ENCODE measurements at regions of chr6 and their contacts with region 1.

Region 1: GRCh38 chr6:86856937-86857563 is 80.3 kb upstream of the HTR1E start:
- DNase-seq: peak; percentile 35
- H3K4me3 Mint-ChIP-seq: no peak overlapping the region
- H3K27ac Mint-ChIP-seq: no peak overlapping the region
- H3K4me1 Mint-ChIP-seq: no peaks in the 10 kb centered on the region
- H3K27me3 Mint-ChIP-seq: no peaks in the 10 kb centered on the region

Region 2: GRCh38 chr6:85923013-85923430 is 934.0 kb before region 1 on chr6:
- CTCF ChIA-PET with region 1: interaction called, 12 read pairs
- DNase-seq: no peak
- H3K4me3 Mint-ChIP-seq: no peak overlapping the region
- H3K27ac Mint-ChIP-seq: no peak overlapping the region
- H3K4me1 Mint-ChIP-seq: no peaks in the 10 kb centered on the region
- H3K27me3 Mint-ChIP-seq: no peaks in the 10 kb centered on the region

Region 3: GRCh38 chr6:87366072-87366827 is 509.2 kb after region 1 on chr6:
- CTCF ChIA-PET with region 1: no interaction called
- DNase-seq: no peak
- H3K4me3 Mint-ChIP-seq: no peak overlapping the region
- H3K27ac Mint-ChIP-seq: no peak overlapping the region
- H3K4me1 Mint-ChIP-seq: no peaks in the 10 kb centered on the region
- H3K27me3 Mint-ChIP-seq: no peaks in the 10 kb centered on the region

Measured in activated naive CD4-positive, alpha-beta T cell treated with anti-CD3 and anti-CD28 coated beads, Interleukin-2, amount 10 ng/mL, durations not matched to agents 7 days and 5 days (primary cell).